CD4-positive, alpha-beta T cell (primary cell): ENCODE measurements at regions of chr1 and their contacts with region 1.

Region 1: GRCh38 chr1:112375701-112376100 is 20.3 kb upstream of the CTTNBP2NL start:
- DNase-seq: no peak
- ATAC-seq: no peak
- H3K4me3 ChIP-seq: no peak overlapping the region
- H3K4me3 Mint-ChIP-seq: no peak overlapping the region
- H3K27ac ChIP-seq: no peak overlapping the region
- H3K27ac Mint-ChIP-seq: no peak overlapping the region
- H3K4me1 ChIP-seq: no peaks in the 10 kb centered on the region
- H3K4me1 Mint-ChIP-seq: no peaks in the 10 kb centered on the region
- H3K27me3 ChIP-seq: peaks cover 11 to 24% of the 10 kb centered on the region in 2 experiments
- H3K27me3 Mint-ChIP-seq: peaks cover 61% of the 10 kb centered on the region
- CTCF ChIP-seq: no peak

Region 2: DNA sequence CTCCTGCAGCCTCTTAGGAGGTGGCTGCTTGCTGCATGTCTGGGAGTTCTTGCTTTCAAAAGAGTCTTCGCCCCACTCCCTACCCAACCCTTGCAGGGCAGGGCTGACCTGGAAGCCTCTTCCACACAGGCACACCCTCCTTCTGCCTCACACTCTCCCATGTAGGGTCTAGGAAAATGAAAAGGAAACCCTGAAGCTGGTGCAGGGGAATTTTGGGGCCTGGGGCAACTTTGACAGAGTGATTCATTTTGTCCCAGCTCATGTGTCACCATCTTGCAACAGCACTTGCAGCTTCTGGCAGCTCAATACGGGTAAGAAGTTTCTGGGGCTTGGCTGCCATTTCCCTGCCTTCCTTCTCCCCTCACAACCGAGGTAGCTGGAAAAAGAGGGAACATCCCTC is 423.5 kb before region 1 on chr1:
- CTCF ChIA-PET with region 1: no interaction called
- POLR2A ChIA-PET with region 1: no interaction called
- intact Hi-C with region 1: loop called in 1 of 2 experiments (anchors 5 kb)
- DNase-seq: no peak
- ATAC-seq: no peak
- H3K4me3 ChIP-seq: no peak overlapping the region
- H3K4me3 Mint-ChIP-seq: no peak overlapping the region
- H3K27ac ChIP-seq: no peak overlapping the region
- H3K27ac Mint-ChIP-seq: no peak overlapping the region
- H3K4me1 ChIP-seq: no peaks in the 10 kb centered on the region
- H3K4me1 Mint-ChIP-seq: no peaks in the 10 kb centered on the region
- H3K27me3 ChIP-seq: peaks cover 15 to 16% of the 10 kb centered on the region in 2 experiments
- H3K27me3 Mint-ChIP-seq: peaks cover 48% of the 10 kb centered on the region
- CTCF ChIP-seq: no peak